ENCODE measurements at regions of chr1 and their contacts with region 1.

Region 1: DNA sequence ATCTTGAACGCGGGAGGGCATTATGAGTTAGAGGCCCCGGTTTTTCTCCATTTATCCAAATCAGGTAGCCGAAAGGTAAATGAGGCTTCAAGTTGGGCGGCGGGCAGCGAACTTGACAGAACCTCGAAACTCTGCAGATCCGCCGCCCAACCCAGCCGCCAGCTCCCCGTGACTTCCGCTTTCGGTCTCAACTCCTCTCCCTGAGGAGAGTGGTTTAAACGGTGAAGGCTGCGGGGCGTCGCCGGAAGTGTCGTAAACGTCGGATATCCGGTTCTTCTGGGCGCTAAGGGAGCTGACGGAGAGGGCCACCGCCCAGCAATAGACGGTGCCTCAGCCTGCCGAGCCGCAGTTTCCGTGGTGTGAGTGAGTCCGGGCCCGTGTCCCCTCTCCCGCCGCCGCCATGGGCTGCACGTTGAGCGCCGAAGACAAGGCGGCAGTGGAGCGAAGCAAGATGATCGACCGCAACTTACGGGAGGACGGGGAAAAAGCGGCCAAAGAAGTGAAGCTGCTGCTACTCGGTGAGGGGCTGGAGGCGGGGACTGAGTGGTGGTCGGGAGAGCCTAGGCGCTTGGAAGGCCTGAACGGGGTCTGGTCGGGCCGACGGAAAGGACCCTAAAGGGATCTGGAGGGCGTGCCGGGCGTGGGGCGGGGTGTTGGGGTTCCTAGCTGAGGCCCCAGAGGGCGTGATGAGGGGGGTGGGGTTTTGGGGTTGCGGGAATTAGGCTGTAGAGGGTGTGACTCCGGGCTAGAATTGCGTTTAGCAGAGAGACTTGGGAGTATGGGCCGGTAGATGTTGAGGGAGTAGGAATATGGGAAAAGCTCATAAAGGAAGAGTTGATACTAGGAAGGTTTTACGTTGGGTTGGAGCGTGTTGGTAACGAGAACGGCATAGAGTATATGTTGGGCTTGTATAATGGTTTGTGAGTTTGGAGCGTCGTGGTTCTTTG is at the start of gene GNAI3:
- DNase-seq: peak; percentile 95
- CTCF ChIP-seq: no peak

Region 2: GRCh38 chr1:109468903-109469302 is 79.7 kb before region 1 on chr1:
- CTCF ChIA-PET with region 1: no interaction called
- POLR2A ChIA-PET with region 1: no interaction called
- DNase-seq: no peak
- CTCF ChIP-seq: no peak

Region 3: GRCh38 chr1:109559995-109560394 is 11.4 kb after region 1 on chr1:
- CTCF ChIA-PET with region 1: interaction called, 14 read pairs
- POLR2A ChIA-PET with region 1: interaction called, 5 read pairs
- DNase-seq: no peak
- CTCF ChIP-seq: no peak

Region 4: GRCh38 chr1:109570417-109570827 is 21.8 kb after region 1 on chr1:
- CTCF ChIA-PET with region 1: interaction called, 11 read pairs
- POLR2A ChIA-PET with region 1: interaction called, 5 read pairs
- DNase-seq: no peak
- CTCF ChIP-seq: no peak

Region 5: GRCh38 chr1:109620841-109621286 is 72.3 kb after region 1 on chr1:
- CTCF ChIA-PET with region 1: interaction called, 36 read pairs
- POLR2A ChIA-PET with region 1: interaction called, 6 read pairs
- DNase-seq: peak; percentile 95
- CTCF ChIP-seq: no peak

Region 6: DNA sequence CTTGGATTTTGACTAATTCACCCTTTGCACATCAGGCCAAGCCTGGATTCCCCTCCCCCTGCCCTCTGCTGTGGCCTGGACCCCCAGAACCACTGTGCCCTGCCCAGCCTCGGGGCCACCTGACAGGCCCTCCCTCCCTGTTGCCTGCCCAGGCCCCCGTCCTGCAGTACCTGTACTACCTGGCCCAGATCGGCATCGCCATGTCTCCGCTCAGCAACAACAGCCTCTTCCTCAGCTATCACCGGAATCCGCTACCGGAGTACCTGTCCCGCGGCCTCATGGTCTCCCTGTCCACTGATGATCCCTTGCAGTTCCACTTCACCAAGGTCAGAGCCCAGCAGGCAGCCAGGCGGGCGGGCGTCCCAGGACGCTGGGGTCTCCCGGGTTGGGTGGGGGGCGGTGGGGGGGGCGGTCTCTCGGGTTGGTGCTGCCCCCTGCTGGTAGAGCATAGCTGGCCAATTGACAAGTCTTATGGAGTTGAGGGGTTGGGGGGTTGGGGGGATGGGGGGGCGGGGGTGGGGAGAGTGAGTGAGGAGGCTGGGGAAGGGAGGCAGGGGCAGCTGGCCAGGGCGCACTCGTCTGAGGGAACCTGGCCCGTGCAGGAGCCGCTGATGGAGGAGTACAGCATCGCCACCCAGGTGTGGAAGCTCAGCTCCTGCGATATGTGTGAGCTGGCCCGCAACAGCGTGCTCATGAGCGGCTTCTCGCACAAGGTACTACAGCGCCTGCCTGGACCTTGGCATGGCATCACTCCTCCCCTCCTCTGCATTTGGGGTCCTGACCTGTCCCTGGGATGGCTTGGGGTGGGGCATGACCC is 81.7 kb after region 1 on chr1:
- CTCF ChIA-PET with region 1: interaction called, 36 read pairs
- POLR2A ChIA-PET with region 1: interaction called, 5 read pairs
- DNase-seq: peak; percentile 59
- CTCF ChIP-seq: peak; percentile 29